Breast epithelium (tissue), 4 donors: ENCODE measurements at regions of chr19 and their contacts with region 1.

Region 1: GRCh38 chr19:17282488-17283255 is 971 bp downstream of the ANKLE1 start:
- DNase-seq: peak; percentile 67 to 90
- H3K4me3 ChIP-seq: peak overlapping the region; percentile 20 to 67 (median 39)
- H3K27ac ChIP-seq: no peak overlapping the region
- H3K4me1 ChIP-seq: peaks cover 5 to 13% of the 10 kb centered on the region in 2 donors
- H3K27me3 ChIP-seq: peaks cover 7 to 15% of the 10 kb centered on the region in 2 donors
- CTCF ChIP-seq: peak; percentile 89 to 93 (median 92)
- POLR2A ChIP-seq: no peak

Region 2: GRCh38 chr19:17069218-17069617 is 213.5 kb before region 1 on chr19:
- intact Hi-C with region 1: loop called (anchors 10 kb)
- DNase-seq: no peak
- H3K4me3 ChIP-seq: no peak overlapping the region
- H3K27ac ChIP-seq: no peak overlapping the region
- H3K4me1 ChIP-seq: peaks cover 2% of the 10 kb centered on the region in 2 donors
- H3K27me3 ChIP-seq: no peaks in the 10 kb centered on the region
- CTCF ChIP-seq: no peak
- POLR2A ChIP-seq: no peak

Region 3: DNA sequence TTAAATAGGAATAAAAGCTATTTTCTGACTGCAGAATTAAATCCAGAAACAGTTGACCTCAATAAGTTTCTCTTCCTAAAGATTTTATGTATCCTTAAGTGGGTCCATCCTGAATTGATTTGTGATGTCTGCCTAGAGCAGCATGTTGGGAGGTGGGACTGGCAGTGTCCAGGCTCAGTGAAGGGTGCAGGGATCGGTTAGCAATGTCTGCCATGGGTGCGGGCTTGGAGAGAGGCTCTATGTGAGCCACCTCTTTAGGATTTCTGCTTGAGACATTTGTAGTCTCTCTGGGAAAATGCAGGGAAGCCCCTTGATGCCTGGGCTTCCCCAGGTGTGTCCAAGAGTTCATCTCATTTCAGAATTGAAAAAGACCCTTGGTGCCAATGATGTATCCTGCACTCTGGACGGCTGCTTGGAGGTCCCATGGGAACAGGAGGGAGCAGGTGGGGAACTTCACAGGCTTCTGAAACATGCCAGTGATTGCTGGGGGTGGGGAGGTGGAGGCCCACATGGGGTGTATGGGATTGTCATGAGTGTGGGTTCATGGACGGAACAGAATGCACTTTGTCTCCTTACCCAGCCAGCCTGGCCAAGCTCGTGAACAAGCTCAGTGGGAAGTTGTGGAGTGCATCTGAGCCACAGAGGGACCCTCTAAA is 266.5 kb after region 1 on chr19:
- intact Hi-C with region 1: no loop called
- DNase-seq: no peak
- H3K4me3 ChIP-seq: no peak overlapping the region
- H3K27ac ChIP-seq: no peak overlapping the region
- H3K4me1 ChIP-seq: no peaks in the 10 kb centered on the region
- H3K27me3 ChIP-seq: no peaks in the 10 kb centered on the region
- CTCF ChIP-seq: no peak
- POLR2A ChIP-seq: no peak